CD14-positive monocyte (primary cell): ENCODE measurements at regions of chr19 and their contacts with region 1.

Region 1: GRCh38 chr19:58439576-58440554 is at the start of gene ZNF132:
- DNase-seq: peak; percentile 100
- H3K4me3 ChIP-seq: peak within 1 kb of the TSS; percentile 47 to 81 (median 79)
- H3K4me3 Mint-ChIP-seq: peak within 1 kb of the TSS; percentile 86 to 93
- H3K27ac ChIP-seq: peak within 1 kb of the TSS; percentile 81 to 93
- H3K27ac Mint-ChIP-seq: peak within 1 kb of the TSS; percentile 93 to 98 (median 95)
- H3K4me1 ChIP-seq: peaks cover 16% of the 10 kb centered on the region in 2 donors
- H3K4me1 Mint-ChIP-seq: peaks cover 16% of the 10 kb centered on the region
- H3K27me3 ChIP-seq: peaks cover 0 to 3% of the 10 kb centered on the region in 2 donors
- H3K27me3 Mint-ChIP-seq: peaks cover 3 to 14% (median 14%) of the 10 kb centered on the region in 3 donors
- CTCF ChIP-seq: no peak
- polyA plus RNA-seq, gene ZNF132: 0.40 to 0.92 (median 0.75) TPM

Region 2: GRCh38 chr19:58386576-58387337 is 53.1 kb before region 1 on chr19 and contains the start of gene RPS5:
- intact Hi-C with region 1: loop called in 1 of 2 experiments (anchors 1 kb)
- DNase-seq: peak; percentile 95 to 100 (median 98)
- H3K4me3 ChIP-seq: peak within 1 kb of the TSS; percentile 60 to 87 (median 84)
- H3K4me3 Mint-ChIP-seq: peak within 1 kb of the TSS; percentile 88 to 95
- H3K27ac ChIP-seq: peak within 1 kb of the TSS; percentile 96 to 98
- H3K27ac Mint-ChIP-seq: peak within 1 kb of the TSS; percentile 93 to 97 (median 96)
- H3K4me1 ChIP-seq: peaks cover 29 to 35% of the 10 kb centered on the region in 2 donors
- H3K4me1 Mint-ChIP-seq: peaks cover 36% of the 10 kb centered on the region
- H3K27me3 ChIP-seq: no peaks in the 10 kb centered on the region
- H3K27me3 Mint-ChIP-seq: peaks cover 0 to 2% (median 0%) of the 10 kb centered on the region in 3 donors
- CTCF ChIP-seq: no peak
- polyA plus RNA-seq, gene RPS5: 485 to 1,381 (median 580) TPM

Region 3: DNA sequence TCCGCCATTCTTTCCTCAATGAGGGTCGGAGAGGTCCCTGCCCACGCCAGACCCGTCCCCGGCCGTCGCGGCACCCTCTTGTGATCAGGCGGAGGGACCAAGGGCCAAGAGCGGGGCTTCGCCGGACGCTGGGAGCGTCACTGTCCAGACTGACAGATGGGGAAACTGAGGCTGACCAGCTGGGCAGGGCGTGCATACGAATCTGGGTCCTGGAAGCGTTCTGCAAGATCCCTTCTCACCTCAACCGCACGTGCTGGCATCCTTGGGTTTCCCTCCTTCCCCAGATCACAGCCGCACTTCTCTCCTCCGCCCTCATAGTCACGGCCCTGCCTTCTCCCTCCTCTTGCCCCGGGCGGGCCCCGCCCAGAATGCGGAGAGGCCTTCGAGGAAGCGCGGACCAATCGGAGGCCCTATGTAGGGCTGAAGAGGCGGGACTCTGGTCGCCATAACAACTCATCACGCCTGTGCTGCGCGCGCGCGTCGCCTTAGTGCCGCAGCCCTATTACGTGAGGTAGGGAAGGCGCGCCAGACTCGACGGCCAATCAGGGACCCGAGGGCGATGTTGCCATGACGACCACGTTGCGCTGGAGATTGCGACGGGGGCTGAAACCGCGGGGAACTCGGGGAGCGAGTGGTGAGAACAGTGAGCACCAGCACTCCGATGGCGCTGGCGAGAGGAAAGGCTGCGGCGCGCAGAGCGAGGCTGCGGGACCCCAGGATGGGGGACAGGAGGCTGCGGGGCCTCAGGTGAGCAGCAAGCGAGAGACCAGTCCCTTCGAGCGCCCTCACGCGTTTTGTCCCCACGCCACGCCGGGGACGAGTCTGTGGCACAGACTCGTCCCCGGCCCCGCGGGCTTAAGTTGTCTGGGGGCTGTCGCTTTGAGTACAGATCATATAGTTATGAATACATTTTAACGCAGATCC is 38.7 kb before region 1 on chr19:
- intact Hi-C with region 1: loop called in 1 of 2 experiments (anchors 2 kb)
- DNase-seq: peak; percentile 99 to 100 (median 100)
- H3K4me3 ChIP-seq: peak overlapping the region; percentile 35 to 72 (median 53)
- H3K4me3 Mint-ChIP-seq: peak overlapping the region; percentile 81 to 88
- H3K27ac ChIP-seq: peak overlapping the region; percentile 3 to 55
- H3K27ac Mint-ChIP-seq: peak overlapping the region; percentile 68 to 91 (median 78)
- H3K4me1 ChIP-seq: peaks cover 14% of the 10 kb centered on the region in 2 donors
- H3K4me1 Mint-ChIP-seq: peaks cover 10% of the 10 kb centered on the region
- H3K27me3 ChIP-seq: peaks cover 0 to 18% of the 10 kb centered on the region in 2 donors
- H3K27me3 Mint-ChIP-seq: peaks cover 18 to 25% (median 24%) of the 10 kb centered on the region in 3 donors
- CTCF ChIP-seq: no peak

Region 4: DNA sequence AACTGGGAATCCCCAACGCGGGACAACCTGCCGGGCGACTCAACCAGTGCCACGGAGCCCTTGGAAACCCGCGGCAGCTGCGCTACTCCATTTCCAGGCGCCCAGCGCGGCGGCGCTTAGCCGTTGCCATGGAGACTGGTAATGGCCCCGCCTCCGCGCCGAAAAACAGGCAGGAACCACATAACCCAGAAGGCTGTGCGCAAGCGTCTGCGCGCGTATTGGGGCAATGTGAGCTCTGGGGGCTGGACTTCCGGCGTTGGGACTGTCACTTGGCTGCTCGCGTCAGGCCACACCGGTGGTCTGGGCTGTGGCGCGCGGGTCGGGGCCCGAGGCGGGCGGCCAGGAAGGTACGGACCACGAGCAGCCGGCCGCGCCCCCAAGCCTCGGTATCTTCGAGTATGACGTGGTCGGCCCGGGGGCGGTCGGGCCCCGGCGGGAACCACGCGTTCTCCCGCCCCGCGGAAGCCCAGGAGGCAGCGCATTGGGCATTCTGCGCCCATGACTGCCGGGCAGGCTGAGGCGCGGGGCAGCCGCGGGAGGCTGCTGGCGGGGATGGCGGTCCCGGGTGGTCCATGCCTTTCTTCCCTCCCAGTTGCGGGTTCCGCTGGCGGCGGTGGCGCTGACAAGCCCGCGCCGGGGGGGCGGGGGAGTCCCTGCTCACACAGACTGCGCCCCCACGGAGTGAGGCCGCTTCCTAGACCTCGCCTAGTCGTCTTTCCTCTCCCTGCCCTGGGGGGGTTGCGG is 11.7 kb after region 1 on chr19 and contains the start of gene ZNF324B:
- intact Hi-C with region 1: loop called in 1 of 2 experiments (anchors 1 kb)
- DNase-seq: peak; percentile 94 to 95 (median 95)
- H3K4me3 ChIP-seq: peak within 1 kb of the TSS; percentile 56 to 93 (median 58)
- H3K4me3 Mint-ChIP-seq: peak within 1 kb of the TSS; percentile 81 to 89
- H3K27ac ChIP-seq: peak within 1 kb of the TSS in 1 of 2 donors; percentile 73
- H3K27ac Mint-ChIP-seq: peak within 1 kb of the TSS in 5 of 7 donors; percentile 22 to 89 (median 73)
- H3K4me1 ChIP-seq: peaks cover 11 to 15% of the 10 kb centered on the region in 2 donors
- H3K4me1 Mint-ChIP-seq: peaks cover 16% of the 10 kb centered on the region
- H3K27me3 ChIP-seq: peaks cover 0 to 5% of the 10 kb centered on the region in 2 donors
- H3K27me3 Mint-ChIP-seq: peaks cover 3 to 10% (median 7%) of the 10 kb centered on the region in 3 donors
- CTCF ChIP-seq: no peak
- polyA plus RNA-seq, gene ZNF324B: 0.46 to 3.1 (median 0.82) TPM

Region 5: GRCh38 chr19:58519355-58520256 is 79.7 kb after region 1 on chr19 and contains the start of gene ZBTB45:
- intact Hi-C with region 1: no loop called
- DNase-seq: peak; percentile 93 to 94 (median 93)
- H3K4me3 ChIP-seq: peak within 1 kb of the TSS; percentile 57 to 90 (median 86)
- H3K4me3 Mint-ChIP-seq: peak within 1 kb of the TSS; percentile 92 to 93
- H3K27ac ChIP-seq: peak within 1 kb of the TSS; percentile 90 to 93
- H3K27ac Mint-ChIP-seq: peak within 1 kb of the TSS; percentile 95 to 99 (median 98)
- H3K4me1 ChIP-seq: peaks cover 30 to 31% of the 10 kb centered on the region in 2 donors
- H3K4me1 Mint-ChIP-seq: peaks cover 36% of the 10 kb centered on the region
- H3K27me3 ChIP-seq: no peaks in the 10 kb centered on the region
- H3K27me3 Mint-ChIP-seq: peaks cover 0 to 1% (median 0%) of the 10 kb centered on the region in 3 donors
- CTCF ChIP-seq: peak; percentile 79
- polyA plus RNA-seq, gene ZBTB45: 2.2 to 5.3 (median 2.6) TPM